Dorsolateral prefrontal cortex (tissue), 120 donors: ENCODE measurements at regions of chr16 and their contacts with region 1.

Region 1: DNA sequence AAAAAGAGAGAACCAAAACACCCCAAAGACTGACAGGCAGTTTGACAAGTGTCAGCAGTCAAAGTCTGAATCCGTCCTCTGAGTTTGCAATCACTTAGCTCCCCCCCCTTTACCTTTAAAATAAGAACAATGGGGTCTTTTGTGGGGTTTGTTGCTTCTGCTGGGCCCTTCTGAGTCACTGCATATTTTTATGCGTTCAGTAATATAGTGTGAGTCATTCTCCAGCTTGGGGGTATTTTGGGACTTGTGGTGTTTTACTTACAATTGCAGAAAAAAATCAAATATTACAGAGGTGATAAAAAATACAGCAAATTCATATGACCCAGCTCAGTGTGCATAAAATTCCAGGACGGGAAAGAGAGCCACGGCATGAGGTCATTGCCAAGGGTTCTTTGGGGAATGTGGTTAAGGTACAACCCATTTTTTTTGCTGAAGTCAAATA is 120.1 kb downstream of the CYLD start:
- DNase-seq: no peak
- H3K4me3 ChIP-seq: no peak overlapping the region
- H3K27ac ChIP-seq: peak overlapping the region in 58 of 59 donors; percentile 13 to 95 (median 86)
- H3K27me3 ChIP-seq: peaks cover 0 to 3% (median 0%) of the 10 kb centered on the region in 45 donors
- CTCF ChIP-seq: peak in 1 of 56 donors; percentile 17

Region 2: DNA sequence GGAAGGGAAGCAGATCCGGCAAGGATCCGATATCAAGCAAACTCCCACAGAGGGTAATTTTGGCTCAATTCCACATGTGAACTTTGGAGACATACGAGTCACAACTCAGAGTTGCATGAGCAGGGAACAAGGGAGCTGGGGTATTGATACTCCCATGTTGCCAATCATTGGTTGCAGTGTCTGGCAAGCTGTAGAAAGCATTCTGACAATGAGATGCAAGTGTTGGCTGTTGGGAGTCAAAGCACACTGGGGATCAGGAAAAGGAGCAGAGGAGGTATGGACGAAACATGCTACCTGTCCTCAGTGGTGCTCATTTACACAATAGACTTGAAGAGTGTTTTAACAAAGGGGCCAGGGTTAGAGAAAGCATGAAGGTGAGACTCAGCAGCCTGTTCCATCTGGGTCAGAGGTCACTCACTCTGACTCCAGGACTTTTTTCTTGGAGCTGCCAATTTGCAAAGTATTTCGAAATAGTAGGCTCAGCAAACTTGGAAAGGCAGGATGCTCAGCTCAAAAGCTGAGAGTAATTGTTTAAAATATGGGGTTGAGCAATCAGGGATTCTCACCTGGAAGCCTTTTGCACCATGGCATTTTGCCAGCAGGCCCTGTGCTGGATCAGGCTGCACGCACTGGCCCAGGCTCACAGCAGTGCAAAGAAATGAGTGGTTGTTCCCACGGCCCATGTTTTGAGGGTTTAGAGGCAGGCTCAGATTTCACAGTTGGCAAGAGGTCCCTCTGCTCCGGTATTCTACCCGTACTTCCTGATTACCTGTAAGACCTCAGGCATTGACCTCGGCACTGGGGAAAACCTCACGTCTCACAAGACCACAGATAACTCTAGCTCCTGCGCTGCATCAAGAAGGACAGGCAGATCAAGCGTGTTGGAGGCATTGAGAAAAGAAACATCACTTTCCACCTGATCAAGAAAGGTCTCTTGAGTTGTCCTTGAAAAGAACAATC is 331.4 kb before region 1 on chr16:
- intact Hi-C with region 1: no loop called
- DNase-seq: no peak
- H3K4me3 ChIP-seq: no peak overlapping the region
- H3K27ac ChIP-seq: no peak overlapping the region
- H3K27me3 ChIP-seq: peaks cover 0 to 5% (median 0%) of the 10 kb centered on the region in 45 donors
- CTCF ChIP-seq: no peak

Region 3: GRCh38 chr16:51055434-51055833 is 193.4 kb after region 1 on chr16:
- intact Hi-C with region 1: loop called in 1 of 2 experiments (anchors 5 kb)
- DNase-seq: no peak
- H3K4me3 ChIP-seq: no peak overlapping the region
- H3K27ac ChIP-seq: peak overlapping the region in 13 of 59 donors; percentile 9 to 98 (median 94)
- H3K27me3 ChIP-seq: peaks cover 0 to 19% (median 0%) of the 10 kb centered on the region in 45 donors
- CTCF ChIP-seq: no peak

Region 4: DNA sequence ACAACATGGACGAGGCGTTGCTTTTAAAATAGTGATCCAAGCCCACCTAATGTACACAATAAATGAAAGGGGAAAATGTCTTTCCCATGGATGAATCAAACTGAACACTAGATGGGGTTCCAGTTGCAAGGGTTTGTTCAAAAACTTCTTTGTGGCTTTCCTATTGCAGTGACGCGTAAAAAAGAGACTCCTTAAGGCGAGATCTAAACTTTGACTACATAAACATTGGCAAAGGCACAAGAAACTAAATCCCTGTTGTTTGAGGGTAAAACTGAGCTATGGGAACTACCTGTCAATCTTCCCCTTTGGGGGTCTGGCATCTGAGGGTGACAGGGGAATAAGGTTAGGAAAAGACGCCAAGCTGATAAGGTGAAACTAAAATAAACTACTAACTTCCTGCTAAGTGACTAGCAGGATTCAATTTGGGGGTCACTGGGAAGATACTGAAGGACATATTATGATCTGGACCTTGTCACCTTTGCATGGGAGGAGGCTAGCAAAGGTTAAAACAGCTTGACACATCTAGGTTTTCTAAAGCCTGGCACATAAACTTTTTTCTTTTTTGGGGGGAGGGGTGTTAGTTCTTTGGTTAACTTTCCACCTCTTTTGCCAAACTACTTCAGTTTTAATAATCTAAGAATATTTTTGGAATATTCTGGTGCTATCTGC is 284.4 kb after region 1 on chr16:
- intact Hi-C with region 1: loop called (anchors 2 kb)
- DNase-seq: no peak
- H3K4me3 ChIP-seq: peak overlapping the region in 53 of 59 donors; percentile 2 to 94 (median 39)
- H3K27ac ChIP-seq: peak overlapping the region in 55 of 59 donors; percentile 7 to 99 (median 72)
- H3K27me3 ChIP-seq: peaks cover 0 to 67% (median 23%) of the 10 kb centered on the region in 45 donors
- CTCF ChIP-seq: peak in 54 of 56 donors; percentile 20 to 78 (median 49)

Region 5: DNA sequence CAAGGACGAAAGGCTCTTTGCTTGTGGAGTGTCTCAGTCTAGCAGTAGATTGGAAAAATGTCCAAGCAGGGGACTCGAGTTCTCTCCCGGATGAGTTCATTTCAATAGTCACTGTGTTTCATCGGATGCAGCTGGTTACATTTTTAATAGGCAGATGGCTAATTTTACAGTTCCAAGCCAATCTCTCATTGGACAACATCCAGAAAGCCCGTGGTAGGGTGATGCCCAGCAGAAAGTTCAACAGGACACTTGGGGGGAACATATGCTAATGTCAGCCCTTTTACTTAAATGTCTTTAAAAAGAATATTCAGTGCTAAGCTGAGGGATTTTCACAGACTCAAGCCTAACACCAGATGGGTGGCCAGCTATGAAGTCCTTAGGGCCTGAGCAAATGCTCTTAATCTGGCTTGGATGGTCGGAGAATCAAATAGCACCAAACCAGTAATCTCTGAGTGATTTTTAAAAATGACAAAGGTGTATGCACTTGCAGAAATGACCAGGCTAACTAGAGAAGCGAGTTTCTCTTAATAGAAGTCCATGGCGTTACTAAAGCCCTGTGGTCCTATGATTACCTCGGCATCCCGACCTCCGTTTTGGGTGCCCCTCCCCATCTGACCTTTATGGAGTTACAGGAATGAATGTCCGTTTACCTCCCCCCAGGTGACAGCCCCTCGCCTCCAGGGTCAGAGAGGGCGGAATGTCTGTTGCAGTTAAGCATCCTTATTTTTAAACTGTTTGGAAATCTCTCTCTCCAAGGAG is 578.3 kb after region 1 on chr16:
- intact Hi-C with region 1: loop called in 1 of 2 experiments (anchors 10 kb)
- DNase-seq: peak in 2 of 10 donors; percentile 33 to 35
- H3K4me3 ChIP-seq: peak overlapping the region in 52 of 59 donors; percentile 1 to 58 (median 29)
- H3K27ac ChIP-seq: peak overlapping the region; percentile 60 to 95 (median 88)
- H3K27me3 ChIP-seq: peaks cover 0 to 37% (median 0%) of the 10 kb centered on the region in 45 donors
- CTCF ChIP-seq: peak in 1 of 56 donors; percentile 3

Region 6: GRCh38 chr16:51762081-51762996 is 900.3 kb after region 1 on chr16:
- intact Hi-C with region 1: loop called (anchors 2 to 10 kb)
- DNase-seq: peak; percentile 26 to 90 (median 85)
- H3K4me3 ChIP-seq: peak overlapping the region in 44 of 59 donors; percentile 5 to 61 (median 38)
- H3K27ac ChIP-seq: peak overlapping the region in 4 of 59 donors; percentile 20 to 34 (median 30)
- H3K27me3 ChIP-seq: peaks cover 0 to 32% (median 3%) of the 10 kb centered on the region in 45 donors
- CTCF ChIP-seq: peak; percentile 83 to 99 (median 95)

Region 7: DNA sequence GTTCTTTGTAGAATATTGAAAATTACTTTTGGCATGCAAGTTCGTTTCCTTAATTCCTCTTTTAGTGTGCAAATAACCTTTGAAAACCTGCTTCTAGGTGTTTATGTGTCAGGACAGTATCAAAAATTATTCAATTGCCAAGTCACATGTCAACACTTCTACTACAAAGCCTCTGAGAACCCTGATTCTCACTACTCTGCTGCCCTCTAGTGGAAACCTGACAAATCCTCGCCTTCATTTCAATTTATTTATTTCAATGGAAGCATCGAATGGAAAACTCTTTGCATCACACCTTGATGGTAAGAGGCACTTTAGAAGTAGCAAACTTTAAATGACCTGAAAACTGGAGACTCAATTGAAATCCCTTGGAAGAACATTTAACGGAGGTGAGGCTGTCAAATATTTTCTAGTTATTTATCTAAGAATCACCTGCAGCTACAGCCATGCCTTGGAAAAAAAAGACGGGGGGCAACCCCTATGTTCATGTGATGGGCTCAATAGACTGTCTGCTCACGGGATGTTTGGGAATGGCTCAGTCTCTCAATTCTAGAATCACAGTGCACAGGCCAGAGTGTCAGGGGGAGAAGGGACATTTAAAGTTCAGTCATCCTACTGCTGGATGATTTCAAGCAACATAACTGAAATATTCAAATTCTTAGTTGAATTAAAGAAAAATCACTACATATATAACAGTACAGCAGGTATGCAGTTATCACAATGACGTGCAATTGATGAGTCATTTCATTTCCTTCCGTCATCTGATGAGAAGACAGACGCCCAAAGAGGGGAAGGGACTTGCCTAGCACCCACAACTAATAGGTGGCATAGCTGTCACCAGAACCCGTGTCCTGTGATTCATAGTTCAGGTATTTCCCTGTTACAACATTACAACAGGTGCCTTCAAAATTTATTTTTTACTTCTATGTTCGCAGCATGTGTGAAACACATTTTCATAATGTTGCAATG is 1121.0 kb after region 1 on chr16:
- intact Hi-C with region 1: loop called (anchors 5 to 10 kb)
- DNase-seq: peak in 4 of 10 donors; percentile 5 to 63 (median 34)
- H3K4me3 ChIP-seq: peak overlapping the region in 1 of 59 donors; percentile 1
- H3K27ac ChIP-seq: peak overlapping the region in 10 of 59 donors; percentile 2 to 67 (median 34)
- H3K27me3 ChIP-seq: peaks cover 0 to 6% (median 0%) of the 10 kb centered on the region in 45 donors
- CTCF ChIP-seq: peak; percentile 69 to 99 (median 89)